Activated naive CD4-positive, alpha-beta T cell treated with anti-CD3 and anti-CD28 coated beads for 36 hours (primary cell): ENCODE measurements at regions of chr11 and their contacts with region 1.

Region 1: GRCh38 chr11:117985953-117986887 is at the start of gene IL10RA:
- DNase-seq: peak; percentile 81
- H3K4me3 Mint-ChIP-seq: peak within 1 kb of the TSS; percentile 84
- H3K27ac Mint-ChIP-seq: peak within 1 kb of the TSS; percentile 88
- H3K4me1 Mint-ChIP-seq: peaks cover 63% of the 10 kb centered on the region
- H3K27me3 Mint-ChIP-seq: no peaks in the 10 kb centered on the region
- total RNA-seq, gene IL10RA: 11.3 to 16.1 TPM

Region 2: GRCh38 chr11:117817368-117818040 is 168.7 kb before region 1 on chr11:
- CTCF ChIA-PET with region 1: interaction called, 4 read pairs
- intact Hi-C with region 1: loop called (anchors 1 kb)
- DNase-seq: peak; percentile 98
- H3K4me3 Mint-ChIP-seq: peak overlapping the region; percentile 56
- H3K27ac Mint-ChIP-seq: peak overlapping the region; percentile 95
- H3K4me1 Mint-ChIP-seq: peaks cover 65% of the 10 kb centered on the region
- H3K27me3 Mint-ChIP-seq: no peaks in the 10 kb centered on the region

Region 3: GRCh38 chr11:118002541-118003423 is 16.6 kb after region 1 on chr11:
- CTCF ChIA-PET with region 1: interaction called, 5 read pairs
- intact Hi-C with region 1: loop called (anchors 1 kb)
- DNase-seq: peak; percentile 73
- H3K4me3 Mint-ChIP-seq: no peak overlapping the region
- H3K27ac Mint-ChIP-seq: peak overlapping the region; percentile 80
- H3K4me1 Mint-ChIP-seq: peaks cover 68% of the 10 kb centered on the region
- H3K27me3 Mint-ChIP-seq: no peaks in the 10 kb centered on the region

Region 4: GRCh38 chr11:118014022-118014580 is 27.9 kb after region 1 on chr11:
- CTCF ChIA-PET with region 1: no interaction called
- intact Hi-C with region 1: no loop called
- DNase-seq: no peak
- H3K4me3 Mint-ChIP-seq: no peak overlapping the region
- H3K27ac Mint-ChIP-seq: no peak overlapping the region
- H3K4me1 Mint-ChIP-seq: peaks cover 25% of the 10 kb centered on the region
- H3K27me3 Mint-ChIP-seq: no peaks in the 10 kb centered on the region

Region 5: DNA sequence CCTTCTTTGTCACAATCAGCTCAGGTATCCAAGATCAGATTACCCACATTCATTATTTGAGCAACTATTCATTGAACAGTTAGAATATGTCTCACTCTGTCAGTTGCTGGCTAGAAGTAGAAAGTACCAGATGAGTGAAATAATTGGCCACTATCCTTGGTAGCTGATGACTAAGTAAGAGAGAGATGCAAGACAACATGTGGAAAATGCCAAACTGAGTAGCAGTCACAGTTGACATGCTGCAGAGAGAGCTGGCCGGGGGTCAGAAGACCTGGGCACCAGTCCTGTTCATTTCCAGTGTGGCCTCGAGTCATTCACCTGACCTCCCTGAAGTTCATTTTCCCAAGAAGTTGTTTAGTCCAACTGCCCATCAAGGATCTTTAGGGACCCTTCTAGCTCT is 123.0 kb after region 1 on chr11:
- CTCF ChIA-PET with region 1: no interaction called
- intact Hi-C with region 1: no loop called
- DNase-seq: no peak
- H3K4me3 Mint-ChIP-seq: no peak overlapping the region
- H3K27ac Mint-ChIP-seq: no peak overlapping the region
- H3K4me1 Mint-ChIP-seq: no peaks in the 10 kb centered on the region
- H3K27me3 Mint-ChIP-seq: no peaks in the 10 kb centered on the region

Region 6: GRCh38 chr11:118401151-118401878 is 415.1 kb after region 1 on chr11 and contains the start of gene ATP5MG:
- CTCF ChIA-PET with region 1: no interaction called
- intact Hi-C with region 1: loop called (anchors 5 kb)
- DNase-seq: peak; percentile 97
- H3K4me3 Mint-ChIP-seq: peak within 1 kb of the TSS; percentile 95
- H3K27ac Mint-ChIP-seq: peak within 1 kb of the TSS; percentile 98
- H3K4me1 Mint-ChIP-seq: peaks cover 58% of the 10 kb centered on the region
- H3K27me3 Mint-ChIP-seq: no peaks in the 10 kb centered on the region
- total RNA-seq, gene ATP5MG: 279 to 284 TPM

Region 7: DNA sequence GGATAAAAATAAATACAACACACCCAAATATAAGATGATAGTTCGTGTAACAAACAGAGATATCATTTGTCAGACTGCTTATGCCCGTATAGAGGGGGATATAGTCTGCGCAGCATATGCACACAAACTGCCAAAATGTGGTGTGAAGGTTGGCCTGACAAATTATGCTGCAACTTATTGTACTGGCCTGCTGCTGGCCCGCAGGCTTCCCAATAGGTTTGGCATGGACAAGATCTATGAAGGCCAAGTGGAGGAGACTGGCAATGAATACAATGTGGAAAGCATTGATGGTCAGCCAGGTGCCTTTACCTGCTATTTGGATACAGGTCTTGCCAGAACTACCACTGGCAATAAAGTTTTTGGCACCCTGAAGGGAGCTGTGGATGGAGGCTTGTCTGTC is 574.6 kb after region 1 on chr11:
- CTCF ChIA-PET with region 1: no interaction called
- intact Hi-C with region 1: no loop called
- DNase-seq: no peak
- H3K4me3 Mint-ChIP-seq: no peak overlapping the region
- H3K27ac Mint-ChIP-seq: no peak overlapping the region
- H3K4me1 Mint-ChIP-seq: peaks cover 17% of the 10 kb centered on the region
- H3K27me3 Mint-ChIP-seq: no peaks in the 10 kb centered on the region